ENCODE measurements at regions of chr7 and their contacts with region 1.

Region 1: GRCh38 chr7:143416565-143417149 is 8.0 kb upstream of the EPHA1 start:
- DNase-seq: no peak
- H3K4me3 ChIP-seq: no peak overlapping the region
- H3K27ac ChIP-seq: no peak overlapping the region
- H3K4me1 ChIP-seq: no peaks in the 10 kb centered on the region
- H3K27me3 ChIP-seq: no peaks in the 10 kb centered on the region
- CTCF ChIP-seq: peak; percentile 80 to 91 (median 83)
- POLR2A ChIP-seq: no peak

Region 2: GRCh38 chr7:143239813-143240212 is 176.8 kb before region 1 on chr7:
- intact Hi-C with region 1: loop called (anchors 10 kb)
- DNase-seq: no peak
- H3K4me3 ChIP-seq: no peak overlapping the region
- H3K27ac ChIP-seq: no peak overlapping the region
- H3K4me1 ChIP-seq: no peaks in the 10 kb centered on the region
- H3K27me3 ChIP-seq: no peaks in the 10 kb centered on the region
- CTCF ChIP-seq: no peak
- POLR2A ChIP-seq: no peak

Region 3: GRCh38 chr7:143256932-143257331 is 159.7 kb before region 1 on chr7:
- intact Hi-C with region 1: no loop called
- DNase-seq: no peak
- H3K4me3 ChIP-seq: no peak overlapping the region
- H3K27ac ChIP-seq: no peak overlapping the region
- H3K4me1 ChIP-seq: no peaks in the 10 kb centered on the region
- H3K27me3 ChIP-seq: no peaks in the 10 kb centered on the region
- CTCF ChIP-seq: no peak
- POLR2A ChIP-seq: no peak